Gastrocnemius medialis (tissue), 4 donors: ENCODE measurements at regions of chr4 and their contacts with region 1.

Region 1: DNA sequence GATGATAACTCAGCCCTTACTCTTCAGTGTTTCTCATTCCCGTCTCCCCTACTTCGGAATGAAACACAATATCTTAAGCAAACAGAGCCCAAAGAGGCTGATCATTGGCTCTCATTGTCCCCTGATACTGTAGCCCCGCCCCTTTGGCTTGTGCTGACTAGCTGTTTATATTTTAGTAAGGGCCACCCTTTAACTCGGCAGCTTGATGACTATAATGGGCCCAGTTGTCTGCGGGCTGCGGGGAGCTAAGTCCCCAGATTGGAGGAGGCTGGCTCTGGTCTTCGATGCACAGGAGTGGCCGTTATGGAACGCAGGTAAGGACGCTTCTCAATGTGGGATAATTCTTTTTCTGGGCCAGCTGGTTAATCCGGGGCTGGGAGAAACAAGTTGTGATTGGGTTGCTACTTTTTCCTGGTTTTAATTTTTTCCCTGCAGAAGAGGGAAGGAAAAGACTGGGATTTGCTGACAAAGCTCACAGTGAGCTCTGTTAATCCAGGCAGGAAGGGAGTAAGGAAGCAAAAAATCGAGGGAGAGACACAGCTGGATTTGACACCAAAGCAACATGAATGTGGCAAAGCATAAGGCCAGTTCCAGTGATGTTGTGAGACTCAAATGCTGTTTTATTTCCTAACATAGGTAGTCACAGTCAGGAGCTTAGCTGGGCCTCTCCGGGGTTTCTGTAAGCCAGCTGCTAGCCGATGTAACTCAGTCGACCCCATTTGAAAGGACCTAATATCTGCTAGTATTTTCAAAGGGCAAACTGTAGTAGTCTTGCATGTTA is at the start of gene TRIM2:
- DNase-seq: peak; percentile 10 to 48
- ATAC-seq: peak; percentile 62 to 71
- H3K4me3 ChIP-seq: peak within 1 kb of the TSS; percentile 10 to 47 (median 31)
- H3K27ac ChIP-seq: peak within 1 kb of the TSS in 1 of 4 donors; percentile 18
- H3K4me1 ChIP-seq: peaks cover 0 to 3% of the 10 kb centered on the region in 2 donors
- H3K27me3 ChIP-seq: no peaks in the 10 kb centered on the region
- CTCF ChIP-seq: no peak
- POLR2A ChIP-seq: peak in 1 of 2 donors; percentile 22
- total RNA-seq, gene TRIM2: 2.6 to 7.2 (median 3.8) TPM

Region 2: GRCh38 chr4:153318696-153319320 is 114.4 kb after region 1 on chr4:
- in situ Hi-C with region 1: loop called in 1 of 4 experiments (anchors 25 kb)
- intact Hi-C with region 1: loop called (anchors 5 kb)
- DNase-seq: no peak
- ATAC-seq: peak in 1 of 2 donors; percentile 44
- H3K4me3 ChIP-seq: no peak overlapping the region
- H3K27ac ChIP-seq: no peak overlapping the region
- H3K4me1 ChIP-seq: no peaks in the 10 kb centered on the region
- H3K27me3 ChIP-seq: no peaks in the 10 kb centered on the region
- CTCF ChIP-seq: peak; percentile 30 to 65 (median 47)
- POLR2A ChIP-seq: no peak